ENCODE measurements at regions of chr4 and their contacts with region 1.

Region 1: GRCh38 chr4:95165926-95166524 is 382.7 kb downstream of the UNC5C start:
- DNase-seq: no peak
- ATAC-seq: peak; percentile 25
- H3K4me3 Mint-ChIP-seq: no peak overlapping the region
- H3K27ac Mint-ChIP-seq: no peak overlapping the region
- H3K4me1 Mint-ChIP-seq: no peaks in the 10 kb centered on the region
- H3K27me3 Mint-ChIP-seq: no peaks in the 10 kb centered on the region
- CTCF ChIP-seq: peak; percentile 34

Region 2: GRCh38 chr4:95153182-95153581 is 12.8 kb before region 1 on chr4:
- CTCF ChIA-PET with region 1: no interaction called
- POLR2A ChIA-PET with region 1: no interaction called
- intact Hi-C with region 1: no loop called
- DNase-seq: no peak
- ATAC-seq: no peak
- H3K4me3 Mint-ChIP-seq: no peak overlapping the region
- H3K27ac Mint-ChIP-seq: no peak overlapping the region
- H3K4me1 Mint-ChIP-seq: peaks cover 3% of the 10 kb centered on the region
- H3K27me3 Mint-ChIP-seq: no peaks in the 10 kb centered on the region
- CTCF ChIP-seq: no peak

Region 3: GRCh38 chr4:95216288-95216605 is 50.2 kb after region 1 on chr4:
- CTCF ChIA-PET with region 1: no interaction called
- POLR2A ChIA-PET with region 1: no interaction called
- intact Hi-C with region 1: no loop called
- DNase-seq: no peak
- ATAC-seq: no peak
- H3K4me3 Mint-ChIP-seq: no peak overlapping the region
- H3K27ac Mint-ChIP-seq: no peak overlapping the region
- H3K4me1 Mint-ChIP-seq: no peaks in the 10 kb centered on the region
- H3K27me3 Mint-ChIP-seq: no peaks in the 10 kb centered on the region
- CTCF ChIP-seq: no peak

Region 4: GRCh38 chr4:97153042-97153441 is 1987.0 kb after region 1 on chr4:
- CTCF ChIA-PET with region 1: no interaction called
- POLR2A ChIA-PET with region 1: no interaction called
- intact Hi-C with region 1: loop called (anchors 10 kb)
- DNase-seq: no peak
- ATAC-seq: no peak
- H3K4me3 Mint-ChIP-seq: no peak overlapping the region
- H3K27ac Mint-ChIP-seq: no peak overlapping the region
- H3K4me1 Mint-ChIP-seq: no peaks in the 10 kb centered on the region
- H3K27me3 Mint-ChIP-seq: no peaks in the 10 kb centered on the region
- CTCF ChIP-seq: no peak

Measured in activated B cell treated with CpG ODN at 0.5 μM for 24 hours (primary cell).